ENCODE measurements at regions of chr15 and their contacts with region 1.

Region 1: DNA sequence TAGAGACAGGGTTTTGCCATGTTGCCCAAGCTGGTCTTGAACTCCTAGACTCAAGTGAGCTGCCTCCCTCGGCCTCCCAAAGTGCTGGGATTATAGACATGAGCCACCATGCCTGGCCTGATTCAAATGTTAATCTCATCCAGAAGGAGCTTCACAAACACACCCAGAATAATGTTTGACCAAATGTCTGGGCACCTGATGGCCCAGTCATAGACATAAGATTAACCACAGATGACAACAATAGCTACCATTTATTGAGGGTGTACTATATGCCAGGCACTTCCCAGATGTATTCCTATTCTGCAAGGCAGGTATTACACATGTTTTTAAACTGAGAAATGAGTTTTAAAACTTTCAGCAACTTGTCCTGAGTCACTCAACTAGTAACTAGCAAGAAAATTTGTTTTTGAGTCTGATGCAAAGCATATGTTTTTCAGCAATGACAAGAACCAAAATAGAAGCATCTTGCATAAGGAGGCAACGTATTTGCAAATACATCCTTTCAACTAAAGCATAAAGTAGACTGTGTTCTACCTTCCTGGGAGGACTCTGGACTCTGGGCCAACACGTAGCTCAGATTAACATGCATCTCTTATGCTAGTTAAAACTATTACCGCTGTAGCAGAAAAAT is 8.1 kb upstream of the SPG21 start:
- DNase-seq: no peak
- H3K4me3 ChIP-seq: no peak overlapping the region
- H3K27ac ChIP-seq: no peak overlapping the region
- H3K4me1 ChIP-seq: no peaks in the 10 kb centered on the region
- H3K27me3 ChIP-seq: no peaks in the 10 kb centered on the region
- CTCF ChIP-seq: no peak
- EP300 ChIP-seq: no peak
- POLR2A ChIP-seq: no peak
- RAD21 ChIP-seq: no peak

Region 2: DNA sequence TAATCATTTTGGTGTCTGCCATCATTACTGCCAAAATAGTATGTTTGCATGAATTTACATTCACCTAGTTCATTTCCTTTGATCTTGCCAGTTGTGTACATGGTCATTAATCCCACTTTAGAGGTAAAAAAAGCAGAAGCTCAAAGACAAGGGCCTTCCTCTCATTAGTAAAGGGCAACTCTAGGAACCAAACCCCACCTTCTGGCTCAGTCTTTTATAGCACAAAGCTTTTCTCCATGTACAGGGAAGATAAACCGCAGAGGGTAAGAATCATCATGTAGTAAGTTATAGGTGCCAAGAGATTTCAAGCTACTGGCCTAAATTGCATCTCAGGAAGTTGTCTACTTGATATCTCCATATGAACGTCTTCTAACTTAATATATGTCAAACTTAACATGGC is 11.1 kb after region 1 on chr15:
- CTCF ChIA-PET with region 1: interaction called, 13 read pairs
- POLR2A ChIA-PET with region 1: interaction called, 7 read pairs
- DNase-seq: no peak
- H3K4me3 ChIP-seq: no peak overlapping the region
- H3K27ac ChIP-seq: no peak overlapping the region
- H3K4me1 ChIP-seq: 0 out of 7 replicates have a peak, but pooled peaks cover 0 to 3% (median 0%) of the 10 kb centered on the region in 4 experiments
- H3K27me3 ChIP-seq: no peaks in the 10 kb centered on the region
- CTCF ChIP-seq: peak in 2 of 3 experiments; percentile 29 to 39; a peak in 2 of 4 replicates
- EP300 ChIP-seq: no peak
- POLR2A ChIP-seq: no peak
- RAD21 ChIP-seq: peak; percentile 41 to 55

Region 3: GRCh38 chr15:65110676-65111292 is 112.9 kb after region 1 on chr15:
- CTCF ChIA-PET with region 1: no interaction called
- POLR2A ChIA-PET with region 1: no interaction called
- DNase-seq: no peak
- H3K4me3 ChIP-seq: no peak overlapping the region
- H3K27ac ChIP-seq: no peak overlapping the region
- H3K4me1 ChIP-seq: no peaks in the 10 kb centered on the region
- H3K27me3 ChIP-seq: no peaks in the 10 kb centered on the region
- CTCF ChIP-seq: no peak
- EP300 ChIP-seq: no peak
- POLR2A ChIP-seq: no peak
- RAD21 ChIP-seq: no peak

Region 4: DNA sequence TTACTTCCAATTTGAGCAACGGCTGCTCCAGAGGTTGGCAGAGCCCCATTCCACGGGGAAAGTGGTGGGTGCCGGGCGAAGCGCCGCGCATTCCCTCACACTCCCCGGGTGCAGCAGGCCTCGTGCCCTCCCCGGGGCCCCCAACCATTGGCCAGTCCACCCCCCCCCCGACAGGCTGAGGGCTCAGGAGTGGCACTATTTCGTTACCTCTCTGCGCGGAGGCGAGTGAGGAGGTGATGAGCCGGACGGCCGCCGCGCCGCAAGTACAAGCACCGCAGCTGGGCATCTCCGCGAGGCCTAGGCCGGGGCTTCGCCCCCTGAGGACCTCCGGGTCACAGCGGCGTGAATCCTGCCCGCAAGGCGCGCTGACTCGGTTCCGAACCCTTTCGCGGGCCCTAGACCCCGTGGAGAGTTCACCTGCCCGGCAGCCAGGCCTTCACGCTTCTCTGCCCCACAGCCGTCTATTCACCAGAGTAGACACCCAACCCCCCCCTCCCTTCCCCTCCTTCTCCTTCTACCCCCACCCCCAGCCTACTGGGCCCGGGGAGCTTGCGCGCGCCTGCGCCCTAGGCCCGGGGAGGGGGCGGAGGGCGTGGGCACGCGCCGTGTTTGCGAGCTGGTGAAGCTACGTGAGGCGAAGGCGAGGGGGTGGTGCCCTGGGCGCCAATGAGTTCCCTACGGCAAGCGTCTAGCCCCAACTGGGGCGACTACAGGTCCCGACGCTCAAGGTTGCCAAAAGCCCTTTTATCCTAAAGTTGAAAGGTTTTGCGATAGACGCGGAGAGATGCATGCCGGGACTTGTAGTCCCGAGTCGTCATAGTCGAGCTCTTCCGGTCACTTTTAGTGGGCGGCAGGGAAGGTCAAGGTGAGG is 187.2 kb after region 1 on chr15 and contains the start of gene CLPX:
- CTCF ChIA-PET with region 1: no interaction called
- POLR2A ChIA-PET with region 1: no interaction called
- DNase-seq: peak; percentile 87 to 88
- H3K4me3 ChIP-seq: peak within 1 kb of the TSS; percentile 60 to 95 (median 92)
- H3K27ac ChIP-seq: peak within 1 kb of the TSS; percentile 80; the same call in 1 of the 2 replicates
- H3K4me1 ChIP-seq: peaks cover 0 to 2% (median 0%) of the 10 kb centered on the region in 4 experiments; a peak in 2 of 7 replicates
- H3K27me3 ChIP-seq: no peaks in the 10 kb centered on the region
- CTCF ChIP-seq: no peak
- EP300 ChIP-seq: no peak
- POLR2A ChIP-seq: peak; percentile 51 to 86
- RAD21 ChIP-seq: no peak
- total RNA-seq, gene CLPX: 53.6 and 56.4 TPM in 2 replicates